ENCODE measurements at regions of chr16 and their contacts with region 1.

Region 1: GRCh38 chr16:50210266-50211038 is 55.9 kb upstream of the ADCY7 start:
- DNase-seq: peak; percentile 38 to 59
- H3K4me3 ChIP-seq: no peak overlapping the region
- H3K27ac ChIP-seq: no peak overlapping the region
- H3K4me1 ChIP-seq: peaks cover 0 to 6% (median 3%) of the 10 kb centered on the region in 4 experiments; a peak in 3 of 7 replicates
- H3K27me3 ChIP-seq: no peaks in the 10 kb centered on the region
- CTCF ChIP-seq: peak; percentile 67 to 95 (median 87)
- EP300 ChIP-seq: no peak
- POLR2A ChIP-seq: no peak
- RAD21 ChIP-seq: peak; percentile 77 to 78

Region 2: DNA sequence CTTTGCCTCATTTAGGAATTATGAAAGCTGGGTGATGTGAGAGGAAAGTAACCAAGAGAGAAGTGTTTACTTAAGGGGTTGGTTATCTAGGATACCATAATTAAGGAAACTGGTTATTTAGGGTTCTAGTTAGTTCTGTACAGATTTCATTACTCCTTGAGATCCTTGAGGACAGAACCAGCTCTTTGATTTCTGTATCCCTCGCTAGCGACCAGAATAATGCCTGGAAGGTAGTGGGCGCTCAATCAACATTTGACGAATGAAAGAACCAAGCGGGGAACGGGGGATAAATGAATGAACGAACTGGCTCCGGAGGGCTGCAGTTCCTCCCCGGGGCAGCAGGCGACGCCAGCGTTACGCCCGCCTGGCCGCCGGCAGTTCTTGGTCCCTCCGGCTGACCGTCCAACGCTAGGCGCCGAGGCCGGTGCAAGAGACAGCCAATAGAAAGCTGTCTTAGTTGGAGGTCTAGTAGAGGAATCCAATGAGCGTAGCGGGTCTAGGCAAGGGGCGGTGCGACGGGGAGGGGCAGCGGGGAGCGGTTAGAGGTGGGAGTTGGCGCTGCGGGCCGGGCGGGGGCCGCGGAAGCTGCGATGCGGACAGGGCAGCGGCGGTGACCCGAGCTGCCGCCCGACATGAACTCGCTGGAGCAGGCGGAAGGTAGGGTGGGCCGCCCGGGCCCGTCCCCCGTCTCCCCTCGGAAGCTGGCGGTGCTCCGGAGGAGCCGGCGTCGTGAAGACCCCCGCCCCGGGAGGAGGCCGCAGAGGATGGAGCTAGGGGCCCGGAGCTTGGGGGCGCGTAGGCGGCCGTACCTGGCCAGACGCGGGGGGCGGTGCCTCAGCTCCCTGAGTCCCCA is 185.5 kb before region 1 on chr16 and contains the start of gene CNEP1R1:
- CTCF ChIA-PET with region 1: interaction called, 28 read pairs
- POLR2A ChIA-PET with region 1: no interaction called
- DNase-seq: peak; percentile 92 to 94
- H3K4me3 ChIP-seq: peak within 1 kb of the TSS; percentile 59 to 95 (median 90)
- H3K27ac ChIP-seq: no peak within 1 kb of the TSS
- H3K4me1 ChIP-seq: peaks cover 0 to 6% (median 0%) of the 10 kb centered on the region in 4 experiments; a peak in 2 of 7 replicates
- H3K27me3 ChIP-seq: no peaks in the 10 kb centered on the region
- CTCF ChIP-seq: peak; percentile 93 to 99 (median 96)
- EP300 ChIP-seq: peak in 1 of 2 experiments; percentile 50; a peak in 1 of 3 replicates
- POLR2A ChIP-seq: peak in 1 of 2 experiments; percentile 28; a peak in 1 of 3 replicates
- RAD21 ChIP-seq: peak; percentile 85 to 88
- total RNA-seq, gene CNEP1R1: 13.6 and 16.2 TPM in 2 replicates

Region 3: GRCh38 chr16:50065624-50066481 is 144.6 kb before region 1 on chr16 and contains the start of gene HEATR3:
- CTCF ChIA-PET with region 1: interaction called, 35 read pairs
- POLR2A ChIA-PET with region 1: no interaction called
- DNase-seq: peak; percentile 84 to 97
- H3K4me3 ChIP-seq: peak within 1 kb of the TSS; percentile 61 to 90 (median 78)
- H3K27ac ChIP-seq: peak within 1 kb of the TSS; percentile 84; the same call in 1 of the 2 replicates
- H3K4me1 ChIP-seq: peaks cover 0 to 9% (median 3%) of the 10 kb centered on the region in 4 experiments; a peak in 5 of 7 replicates
- H3K27me3 ChIP-seq: no peaks in the 10 kb centered on the region
- CTCF ChIP-seq: no peak
- EP300 ChIP-seq: no peak
- POLR2A ChIP-seq: peak in 1 of 2 experiments; percentile 29; a peak in 1 of 3 replicates
- RAD21 ChIP-seq: 0 out of 4 replicates have a peak, but pooled peaks of 1 of the 2 experiments have one; percentile 1
- total RNA-seq, gene HEATR3: 22.2 and 29.2 TPM in 2 replicates

Region 4: DNA sequence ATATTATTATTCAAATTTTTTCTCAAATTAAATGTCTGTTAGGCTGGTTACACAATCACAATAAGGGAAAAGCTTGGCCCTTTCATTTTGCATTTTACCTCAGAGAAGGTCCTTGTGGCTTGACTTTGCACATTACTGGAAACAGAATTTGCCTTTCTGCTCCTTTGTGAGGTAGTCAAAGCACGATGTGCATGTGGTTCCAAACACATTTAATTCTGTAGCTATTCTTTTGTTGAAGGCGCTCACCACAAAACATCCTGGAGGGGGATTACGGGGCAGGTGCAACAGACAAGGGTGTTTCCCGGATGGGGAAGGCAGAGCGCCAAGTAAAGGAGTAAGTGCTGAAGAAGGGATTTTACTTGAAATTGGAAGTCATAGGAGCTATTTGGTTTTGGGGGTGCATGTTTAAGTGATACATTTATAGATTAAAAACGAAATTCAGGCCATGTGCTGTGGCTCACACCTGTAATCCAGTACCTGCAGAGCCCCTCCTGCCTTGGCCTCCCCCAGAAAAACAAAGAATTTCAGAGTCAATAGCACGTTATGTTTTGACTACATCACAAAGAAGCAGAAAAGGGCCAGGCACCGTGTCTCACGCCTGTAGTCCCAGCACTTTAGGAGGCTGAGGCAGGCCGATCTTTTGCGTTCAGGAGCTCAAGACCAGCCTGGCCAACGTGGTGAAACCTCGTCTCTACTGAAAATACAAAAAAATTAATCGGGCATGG is 88.6 kb before region 1 on chr16:
- CTCF ChIA-PET with region 1: interaction called, 10 read pairs
- POLR2A ChIA-PET with region 1: no interaction called
- DNase-seq: no peak
- H3K4me3 ChIP-seq: no peak overlapping the region
- H3K27ac ChIP-seq: no peak overlapping the region
- H3K4me1 ChIP-seq: peaks cover 0 to 3% (median 1%) of the 10 kb centered on the region in 4 experiments; a peak in 3 of 7 replicates
- H3K27me3 ChIP-seq: no peaks in the 10 kb centered on the region
- CTCF ChIP-seq: no peak
- EP300 ChIP-seq: no peak
- POLR2A ChIP-seq: no peak
- RAD21 ChIP-seq: no peak

Region 5: DNA sequence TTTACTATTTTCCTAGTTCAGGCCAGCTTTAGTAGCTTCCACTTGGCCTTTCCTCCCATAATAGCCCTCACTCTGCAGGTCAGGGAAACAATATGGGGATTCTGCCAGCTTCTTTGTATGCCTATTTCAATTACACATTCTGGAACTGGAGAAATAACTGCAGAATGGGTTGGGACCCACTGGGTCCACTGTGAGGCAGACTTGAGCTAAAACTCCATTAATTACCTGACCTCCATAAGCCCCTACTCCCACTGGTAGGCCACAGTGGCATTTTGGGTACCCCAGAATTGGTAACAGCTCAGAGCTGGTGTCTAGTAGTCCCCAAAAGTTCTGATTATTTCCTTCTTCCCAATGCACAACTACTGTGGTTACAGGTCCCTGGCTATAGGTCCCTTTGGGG is 74.1 kb before region 1 on chr16:
- CTCF ChIA-PET with region 1: interaction called, 65 read pairs
- POLR2A ChIA-PET with region 1: no interaction called
- DNase-seq: no peak
- H3K4me3 ChIP-seq: no peak overlapping the region
- H3K27ac ChIP-seq: no peak overlapping the region
- H3K4me1 ChIP-seq: no peaks in the 10 kb centered on the region
- H3K27me3 ChIP-seq: no peaks in the 10 kb centered on the region
- CTCF ChIP-seq: peak in 2 of 3 experiments; percentile 36 to 50; a peak in 3 of 4 replicates
- EP300 ChIP-seq: no peak
- POLR2A ChIP-seq: no peak
- RAD21 ChIP-seq: peak; percentile 51 to 62

Region 6: DNA sequence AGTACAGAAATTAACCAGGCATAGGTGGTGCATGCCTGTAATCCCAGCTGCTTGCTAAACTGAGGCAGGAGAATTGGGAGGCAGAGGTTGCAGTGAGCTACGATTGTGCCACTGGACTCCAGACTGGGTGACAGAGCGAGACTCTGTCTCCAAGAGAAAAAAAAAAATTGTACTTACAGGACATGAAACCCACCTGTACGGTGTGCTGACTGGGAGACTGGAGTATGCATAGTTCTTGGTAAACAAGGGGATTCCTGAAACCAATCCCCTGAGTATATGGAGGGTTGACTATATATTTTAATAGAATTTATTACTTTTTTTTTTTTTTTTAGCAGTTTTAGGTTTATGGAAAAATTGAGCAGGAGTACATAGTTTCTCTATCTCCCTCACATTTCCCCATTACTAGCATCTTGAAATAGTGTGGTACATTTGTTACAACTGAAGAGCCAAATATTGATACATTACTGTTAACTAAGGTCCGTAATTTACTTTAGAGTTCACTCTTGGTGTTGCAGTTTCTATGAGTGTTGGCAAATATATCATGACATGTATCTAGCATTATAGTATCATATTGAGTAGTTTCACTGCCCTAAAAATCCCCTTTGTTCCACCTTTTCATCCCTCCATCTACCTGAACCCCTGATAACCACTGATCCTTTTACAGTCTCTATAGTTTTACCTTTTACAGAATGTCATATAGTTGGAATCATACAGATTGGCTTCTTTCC is 38.1 kb before region 1 on chr16:
- CTCF ChIA-PET with region 1: interaction called, 11 read pairs
- POLR2A ChIA-PET with region 1: no interaction called
- DNase-seq: no peak
- H3K4me3 ChIP-seq: no peak overlapping the region
- H3K27ac ChIP-seq: no peak overlapping the region
- H3K4me1 ChIP-seq: no peaks in the 10 kb centered on the region
- H3K27me3 ChIP-seq: no peaks in the 10 kb centered on the region
- CTCF ChIP-seq: no peak
- EP300 ChIP-seq: no peak
- POLR2A ChIP-seq: no peak
- RAD21 ChIP-seq: no peak

Region 7: DNA sequence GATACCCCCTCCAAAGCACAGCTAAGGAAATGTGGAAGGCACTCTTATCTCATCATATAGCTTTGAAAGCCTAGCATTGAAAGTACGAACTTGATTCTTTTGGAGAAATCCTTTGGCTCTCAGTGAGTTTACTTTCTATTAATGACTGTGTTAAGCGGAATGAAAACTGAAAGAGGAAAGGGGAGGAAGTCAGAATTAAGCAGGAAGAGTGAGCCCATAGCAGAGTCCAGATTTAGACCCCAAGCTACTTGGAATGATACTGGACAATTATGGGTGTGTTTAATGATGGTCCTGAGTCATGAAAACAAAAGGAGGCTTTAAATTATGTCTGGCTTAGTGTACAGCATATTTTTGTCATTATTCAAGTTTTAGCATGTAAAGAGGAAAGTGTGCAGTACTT is 15.2 kb before region 1 on chr16:
- CTCF ChIA-PET with region 1: interaction called, 12 read pairs
- POLR2A ChIA-PET with region 1: interaction called, 3 read pairs
- DNase-seq: no peak
- H3K4me3 ChIP-seq: no peak overlapping the region
- H3K27ac ChIP-seq: no peak overlapping the region
- H3K4me1 ChIP-seq: no peaks in the 10 kb centered on the region
- H3K27me3 ChIP-seq: no peaks in the 10 kb centered on the region
- CTCF ChIP-seq: no peak
- EP300 ChIP-seq: no peak
- POLR2A ChIP-seq: no peak
- RAD21 ChIP-seq: no peak

Region 8: GRCh38 chr16:50709053-50709684 is 498.7 kb after region 1 on chr16:
- CTCF ChIA-PET with region 1: no interaction called
- POLR2A ChIA-PET with region 1: no interaction called
- DNase-seq: no peak
- H3K4me3 ChIP-seq: no peak overlapping the region
- H3K27ac ChIP-seq: no peak overlapping the region
- H3K4me1 ChIP-seq: peaks cover 0 to 3% (median 0%) of the 10 kb centered on the region in 4 experiments; a peak in 1 of 7 replicates
- H3K27me3 ChIP-seq: no peaks in the 10 kb centered on the region
- CTCF ChIP-seq: no peak
- EP300 ChIP-seq: no peak
- POLR2A ChIP-seq: no peak
- RAD21 ChIP-seq: no peak

Measured in H1 (cell line).